Left ventricle myocardium inferior (tissue), 1 donor: ENCODE measurements at regions of chr13 and their contacts with region 1.

Region 1: GRCh38 chr13:59677966-59678814 is 485.5 kb downstream of the DIAPH3 start:
- DNase-seq: no peak
- H3K4me3 ChIP-seq: peak overlapping the region; percentile 1
- H3K27ac ChIP-seq: peak overlapping the region; percentile 36
- H3K4me1 ChIP-seq: peaks cover 23% of the 10 kb centered on the region
- H3K27me3 ChIP-seq: no peaks in the 10 kb centered on the region
- CTCF ChIP-seq: peak; percentile 89

Region 2: GRCh38 chr13:59391696-59392095 is 286.5 kb before region 1 on chr13:
- intact Hi-C with region 1: loop called (anchors 5 kb)
- DNase-seq: no peak
- H3K4me3 ChIP-seq: no peak overlapping the region
- H3K27ac ChIP-seq: peak overlapping the region; percentile 24
- H3K4me1 ChIP-seq: peaks cover 21% of the 10 kb centered on the region
- H3K27me3 ChIP-seq: no peaks in the 10 kb centered on the region
- CTCF ChIP-seq: peak; percentile 95

Region 3: DNA sequence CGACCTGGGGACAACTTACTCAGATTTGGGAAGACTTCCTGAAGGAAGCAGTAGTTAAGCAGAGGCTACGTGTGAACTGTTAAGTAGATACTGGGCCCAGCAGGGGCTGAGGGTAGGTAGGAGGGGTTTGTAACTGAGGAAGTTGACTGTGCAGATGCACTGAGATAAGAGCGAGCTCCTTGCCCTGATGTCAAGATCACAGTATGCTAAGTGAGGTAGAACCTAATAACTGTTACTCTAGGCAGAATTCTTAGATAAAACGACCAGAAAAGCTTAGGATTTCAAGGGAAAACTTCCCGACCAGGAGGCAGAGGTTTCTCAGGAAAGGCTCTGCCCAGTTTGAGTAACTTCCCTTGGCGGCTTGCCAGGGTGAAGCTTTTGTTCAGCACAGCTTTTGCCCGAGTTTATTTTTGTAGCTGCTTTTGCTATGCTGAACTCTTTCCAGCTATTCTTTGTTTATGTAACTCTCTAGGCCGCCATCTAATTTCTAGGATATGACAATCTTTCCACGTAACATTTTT is 146.6 kb before region 1 on chr13:
- intact Hi-C with region 1: loop called (anchors 10 kb)
- DNase-seq: peak; percentile 85
- H3K4me3 ChIP-seq: no peak overlapping the region
- H3K27ac ChIP-seq: peak overlapping the region; percentile 74
- H3K4me1 ChIP-seq: peaks cover 49% of the 10 kb centered on the region
- H3K27me3 ChIP-seq: no peaks in the 10 kb centered on the region
- CTCF ChIP-seq: no peak

Region 4: GRCh38 chr13:59734393-59734792 is 56.2 kb after region 1 on chr13:
- intact Hi-C with region 1: no loop called
- DNase-seq: no peak
- H3K4me3 ChIP-seq: no peak overlapping the region
- H3K27ac ChIP-seq: no peak overlapping the region
- H3K4me1 ChIP-seq: no peaks in the 10 kb centered on the region
- H3K27me3 ChIP-seq: no peaks in the 10 kb centered on the region
- CTCF ChIP-seq: no peak

Region 5: DNA sequence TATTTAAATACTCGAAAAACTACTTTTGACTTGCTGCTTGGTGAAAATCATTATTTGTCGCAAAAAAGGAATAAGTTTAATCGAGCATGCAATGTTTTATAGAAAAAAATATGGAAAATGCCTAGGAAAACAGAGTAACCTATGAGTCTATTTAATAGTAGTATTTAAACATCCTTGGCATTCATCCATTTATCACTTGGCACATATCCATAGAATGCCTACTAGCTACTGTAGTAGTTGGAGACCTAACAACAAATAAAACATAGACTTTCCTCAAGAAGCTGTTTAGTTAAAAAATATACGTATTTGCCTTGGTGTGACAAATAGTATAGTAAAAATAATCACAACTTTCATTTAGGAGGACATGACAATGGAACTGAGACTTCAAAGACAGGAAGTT is 183.5 kb after region 1 on chr13:
- intact Hi-C with region 1: no loop called
- DNase-seq: no peak
- H3K4me3 ChIP-seq: no peak overlapping the region
- H3K27ac ChIP-seq: no peak overlapping the region
- H3K4me1 ChIP-seq: no peaks in the 10 kb centered on the region
- H3K27me3 ChIP-seq: no peaks in the 10 kb centered on the region
- CTCF ChIP-seq: no peak